Breast epithelium (tissue), 4 donors: ENCODE measurements at regions of chr15 and their contacts with region 1.

Region 1: GRCh38 chr15:77475898-77476297 is 55.2 kb downstream of the HMG20A start:
- DNase-seq: no peak
- H3K4me3 ChIP-seq: no peak overlapping the region
- H3K27ac ChIP-seq: no peak overlapping the region
- H3K4me1 ChIP-seq: no peaks in the 10 kb centered on the region
- H3K27me3 ChIP-seq: no peaks in the 10 kb centered on the region
- CTCF ChIP-seq: no peak
- POLR2A ChIP-seq: no peak

Region 2: GRCh38 chr15:77521206-77521605 is 45.3 kb after region 1 on chr15:
- intact Hi-C with region 1: loop called (anchors 2 kb)
- DNase-seq: no peak
- H3K4me3 ChIP-seq: no peak overlapping the region
- H3K27ac ChIP-seq: no peak overlapping the region
- H3K4me1 ChIP-seq: no peaks in the 10 kb centered on the region
- H3K27me3 ChIP-seq: no peaks in the 10 kb centered on the region
- CTCF ChIP-seq: no peak
- POLR2A ChIP-seq: no peak